ENCODE measurements at regions of chr19 and their contacts with region 1.

Region 1: DNA sequence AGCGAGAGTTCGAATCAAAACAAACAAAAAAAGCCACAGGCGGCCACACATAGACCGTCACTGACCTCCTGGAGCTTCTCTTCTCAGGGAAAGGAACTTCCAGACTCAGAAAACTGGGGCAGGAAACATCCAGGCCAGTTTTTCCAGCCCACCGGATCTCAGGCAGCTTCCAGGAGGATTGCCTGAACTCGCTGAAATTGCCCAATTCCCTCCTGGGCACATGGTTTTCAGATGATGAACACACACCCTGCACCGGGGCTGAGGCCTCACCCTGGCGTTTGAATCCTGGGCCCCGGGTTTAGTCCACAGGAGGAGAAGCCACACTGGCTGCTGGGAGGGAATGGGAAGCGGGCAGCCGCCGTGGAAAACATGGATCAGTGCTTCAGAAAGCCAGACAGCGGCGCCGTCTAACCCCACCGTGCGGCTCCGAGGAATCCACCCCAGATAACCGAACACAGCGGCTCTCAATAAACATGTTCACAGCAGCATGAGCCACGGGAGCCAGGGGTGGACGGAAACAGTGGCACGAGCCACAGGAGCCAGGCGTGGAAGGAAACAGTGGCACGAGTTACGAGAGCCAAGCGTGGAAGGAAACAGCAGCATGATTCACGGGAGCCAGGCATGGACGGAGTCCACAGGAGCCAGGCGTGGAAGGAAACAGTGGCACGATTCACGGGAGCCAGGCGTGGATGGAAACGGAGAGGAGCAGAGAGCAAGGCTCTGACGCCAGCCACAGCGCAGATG is 18.2 kb upstream of the PTBP1 start:
- DNase-seq: peak; percentile 95
- H3K4me3 ChIP-seq: no peak overlapping the region
- H3K27ac ChIP-seq: peak overlapping the region; percentile 11
- H3K4me1 ChIP-seq: peaks cover 14% of the 10 kb centered on the region
- H3K27me3 ChIP-seq: no peaks in the 10 kb centered on the region
- CTCF ChIP-seq: no peak

Region 2: DNA sequence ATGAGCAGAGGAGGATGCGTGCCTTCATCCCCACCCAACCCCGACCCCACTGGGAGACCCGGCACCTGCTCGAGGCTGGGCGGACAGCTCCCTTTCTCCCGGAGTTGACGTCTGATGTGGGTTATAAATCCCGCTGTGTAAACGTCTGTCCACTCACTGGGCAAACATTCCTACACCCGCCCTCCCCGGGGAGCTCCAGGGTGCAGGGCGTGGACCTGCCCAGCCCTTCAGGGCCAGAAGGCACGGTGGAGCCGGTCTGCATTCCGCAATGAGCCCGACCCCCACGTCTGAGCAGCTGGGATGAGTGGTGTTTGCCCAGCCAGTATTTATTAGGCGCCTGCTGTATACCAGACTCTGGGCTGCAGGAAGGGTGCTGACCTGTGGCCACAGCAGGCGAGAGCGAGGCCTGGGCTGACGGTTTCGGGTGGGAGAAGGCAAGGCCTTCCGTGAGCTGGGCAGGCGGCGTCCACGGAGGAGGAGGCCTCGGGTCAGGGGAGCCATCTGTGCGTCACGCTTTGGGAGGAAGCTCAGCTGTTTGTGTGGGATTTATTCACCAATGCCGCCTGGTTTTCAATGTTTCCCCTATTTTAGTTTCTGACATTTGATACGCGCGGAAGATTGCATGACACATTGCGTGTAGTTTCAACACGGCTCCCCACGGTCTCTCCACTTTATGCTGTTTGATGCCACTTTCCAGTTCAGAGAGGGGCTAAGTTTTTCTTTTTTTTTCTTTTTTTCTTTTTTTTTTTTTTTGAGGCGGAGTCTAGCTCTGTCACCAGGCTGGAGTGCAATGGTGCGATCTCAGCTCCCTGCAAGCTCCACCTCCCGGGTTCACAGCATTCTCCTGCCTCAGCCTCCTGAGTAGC is 26.2 kb before region 1 on chr19:
- CTCF ChIA-PET with region 1: no interaction called
- dilution Hi-C with region 1: no loop called
- in situ Hi-C with region 1: no loop called
- intact Hi-C with region 1: no loop called
- DNase-seq: peak; percentile 70
- H3K4me3 ChIP-seq: no peak overlapping the region
- H3K27ac ChIP-seq: no peak overlapping the region
- H3K4me1 ChIP-seq: peaks cover 23% of the 10 kb centered on the region
- H3K27me3 ChIP-seq: no peaks in the 10 kb centered on the region
- CTCF ChIP-seq: no peak

Region 3: DNA sequence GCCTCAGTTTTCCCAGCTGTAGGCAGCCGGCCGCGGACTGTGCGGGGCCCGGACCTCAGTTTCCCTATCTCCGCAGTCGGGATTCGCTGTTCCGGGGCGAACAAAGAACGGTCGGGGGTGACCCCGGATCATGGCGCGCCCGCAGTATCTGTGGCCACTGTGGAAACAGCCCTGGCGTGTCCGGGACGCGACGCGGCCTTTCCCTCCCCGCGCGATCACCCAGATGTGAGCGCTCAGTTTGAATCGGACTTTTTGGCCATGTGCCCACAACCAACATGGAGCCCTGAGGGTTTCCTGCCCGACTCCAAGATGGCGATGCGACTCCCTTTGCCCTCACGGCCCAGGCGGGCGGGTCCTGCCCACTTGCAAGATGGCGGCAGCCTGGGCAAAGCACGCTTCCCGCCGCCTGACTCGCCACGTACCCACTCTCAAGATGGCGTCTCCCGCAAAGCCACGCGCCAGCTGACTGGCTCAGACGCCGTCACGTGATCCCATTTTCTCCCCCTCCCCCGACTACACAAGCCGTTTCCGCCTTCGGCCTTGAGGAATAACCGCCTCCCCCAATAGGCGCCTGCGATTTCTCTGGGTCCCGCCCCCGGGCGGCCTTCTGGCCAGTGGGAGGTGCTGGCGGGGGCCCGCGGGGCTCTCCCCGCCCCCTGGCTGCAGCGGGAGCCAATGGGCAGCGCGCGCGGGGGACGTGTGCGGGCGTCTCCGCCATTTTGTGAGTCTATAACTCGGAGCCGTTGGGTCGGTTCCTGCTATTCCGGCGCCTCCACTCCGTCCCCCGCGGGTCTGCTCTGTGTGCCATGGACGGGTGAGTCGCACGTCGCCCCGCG is 17.8 kb after region 1 on chr19 and contains the start of gene PTBP1:
- CTCF ChIA-PET with region 1: no interaction called
- dilution Hi-C with region 1: no loop called
- in situ Hi-C with region 1: no loop called
- intact Hi-C with region 1: loop called (anchors 1 kb)
- DNase-seq: peak; percentile 100
- H3K4me3 ChIP-seq: peak within 1 kb of the TSS; percentile 82 to 97 (median 92)
- H3K27ac ChIP-seq: peak within 1 kb of the TSS; percentile 68
- H3K4me1 ChIP-seq: peaks cover 26% of the 10 kb centered on the region
- H3K27me3 ChIP-seq: no peaks in the 10 kb centered on the region
- CTCF ChIP-seq: no peak
- total RNA-seq, gene PTBP1: 88.9 to 383 TPM